Mammary epithelial cell (primary cell): ENCODE measurements at regions of chr14 and their contacts with region 1.

Region 1: DNA sequence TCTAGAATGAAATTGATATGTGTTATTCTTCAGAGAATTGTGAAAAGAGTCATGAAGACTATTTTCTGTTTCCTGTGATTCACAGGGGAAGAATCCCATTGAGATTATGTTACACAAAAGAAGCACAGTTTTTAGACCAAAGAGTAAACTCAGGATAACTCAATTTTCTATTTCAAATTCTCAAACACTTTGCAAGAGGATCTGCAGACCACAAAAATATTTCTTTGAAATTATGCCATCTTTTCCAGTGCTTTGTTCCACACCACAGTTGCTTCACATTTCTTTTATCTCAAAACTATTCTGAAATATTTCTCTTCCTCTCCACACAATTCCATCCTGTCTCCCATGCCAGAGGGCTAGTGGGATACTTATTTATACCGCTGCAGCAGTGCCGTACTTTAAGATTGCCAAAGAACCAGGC is 188.9 kb upstream of the FOXG1 start:
- DNase-seq: peak; percentile 64
- H3K4me3 ChIP-seq: peak overlapping the region; percentile 18 to 67 (median 67)
- H3K27ac ChIP-seq: peak overlapping the region; percentile 76
- H3K4me1 ChIP-seq: peaks cover 12% of the 10 kb centered on the region
- H3K27me3 ChIP-seq: no peaks in the 10 kb centered on the region
- CTCF ChIP-seq: no peak

Region 2: GRCh38 chr14:28308734-28309133 is 269.0 kb before region 1 on chr14:
- CTCF ChIA-PET with region 1: no interaction called
- dilution Hi-C with region 1: no loop called
- in situ Hi-C with region 1: no loop called
- intact Hi-C with region 1: loop called (anchors 2 kb)
- DNase-seq: peak; percentile 81
- H3K4me3 ChIP-seq: no peak overlapping the region
- H3K27ac ChIP-seq: peak overlapping the region; percentile 69
- H3K4me1 ChIP-seq: peaks cover 25% of the 10 kb centered on the region
- H3K27me3 ChIP-seq: no peaks in the 10 kb centered on the region
- CTCF ChIP-seq: no peak

Region 3: DNA sequence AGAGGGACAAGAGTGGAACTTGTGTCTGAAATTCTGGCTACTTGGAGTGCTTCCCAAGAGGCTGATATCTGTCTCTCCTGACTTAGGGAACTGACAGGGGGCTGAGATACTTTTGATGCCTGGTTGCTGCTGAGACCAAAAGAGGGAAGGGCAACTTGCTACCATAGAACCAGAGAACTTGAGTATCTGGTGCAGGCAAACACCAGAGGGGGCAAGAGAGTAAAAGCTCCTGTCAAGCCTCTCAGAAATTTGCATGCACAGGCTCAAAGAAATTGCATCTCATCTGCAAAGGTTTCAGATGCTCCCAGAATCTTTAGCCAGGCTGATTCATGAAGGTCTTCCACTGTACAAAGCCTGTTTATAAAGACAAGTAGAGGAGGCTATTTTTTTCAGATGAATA is 202.4 kb before region 1 on chr14:
- CTCF ChIA-PET with region 1: no interaction called
- dilution Hi-C with region 1: no loop called
- in situ Hi-C with region 1: loop called in 1 of 2 experiments (anchors 10 kb)
- intact Hi-C with region 1: loop called (anchors 2 kb)
- DNase-seq: peak; percentile 30
- H3K4me3 ChIP-seq: no peak overlapping the region
- H3K27ac ChIP-seq: no peak overlapping the region
- H3K4me1 ChIP-seq: no peaks in the 10 kb centered on the region
- H3K27me3 ChIP-seq: no peaks in the 10 kb centered on the region
- CTCF ChIP-seq: peak; percentile 55 to 80

Region 4: GRCh38 chr14:28382460-28383220 is 195.1 kb before region 1 on chr14:
- CTCF ChIA-PET with region 1: no interaction called
- dilution Hi-C with region 1: no loop called
- in situ Hi-C with region 1: loop called in 1 of 2 experiments (anchors 10 kb)
- intact Hi-C with region 1: no loop called
- DNase-seq: peak; percentile 85
- H3K4me3 ChIP-seq: no peak overlapping the region
- H3K27ac ChIP-seq: peak overlapping the region; percentile 73
- H3K4me1 ChIP-seq: peaks cover 16% of the 10 kb centered on the region
- H3K27me3 ChIP-seq: no peaks in the 10 kb centered on the region
- CTCF ChIP-seq: no peak

Region 5: GRCh38 chr14:28494196-28494595 is 83.5 kb before region 1 on chr14:
- CTCF ChIA-PET with region 1: interaction called, 3 read pairs
- dilution Hi-C with region 1: no loop called
- in situ Hi-C with region 1: no loop called
- intact Hi-C with region 1: loop called (anchors 5 kb)
- DNase-seq: peak; percentile 84
- H3K4me3 ChIP-seq: no peak overlapping the region
- H3K27ac ChIP-seq: peak overlapping the region; percentile 77
- H3K4me1 ChIP-seq: peaks cover 8% of the 10 kb centered on the region
- H3K27me3 ChIP-seq: no peaks in the 10 kb centered on the region
- CTCF ChIP-seq: no peak

Region 6: GRCh38 chr14:28652811-28653221 is 75.1 kb after region 1 on chr14:
- CTCF ChIA-PET with region 1: no interaction called
- dilution Hi-C with region 1: no loop called
- in situ Hi-C with region 1: no loop called
- intact Hi-C with region 1: loop called (anchors 10 kb)
- DNase-seq: peak; percentile 91
- H3K4me3 ChIP-seq: peak overlapping the region in 2 of 3 experiments; percentile 19 to 29
- H3K27ac ChIP-seq: peak overlapping the region; percentile 99
- H3K4me1 ChIP-seq: peaks cover 46% of the 10 kb centered on the region
- H3K27me3 ChIP-seq: no peaks in the 10 kb centered on the region
- CTCF ChIP-seq: no peak